ENCODE measurements at regions of chr19 and their contacts with region 1.

Region 1: DNA sequence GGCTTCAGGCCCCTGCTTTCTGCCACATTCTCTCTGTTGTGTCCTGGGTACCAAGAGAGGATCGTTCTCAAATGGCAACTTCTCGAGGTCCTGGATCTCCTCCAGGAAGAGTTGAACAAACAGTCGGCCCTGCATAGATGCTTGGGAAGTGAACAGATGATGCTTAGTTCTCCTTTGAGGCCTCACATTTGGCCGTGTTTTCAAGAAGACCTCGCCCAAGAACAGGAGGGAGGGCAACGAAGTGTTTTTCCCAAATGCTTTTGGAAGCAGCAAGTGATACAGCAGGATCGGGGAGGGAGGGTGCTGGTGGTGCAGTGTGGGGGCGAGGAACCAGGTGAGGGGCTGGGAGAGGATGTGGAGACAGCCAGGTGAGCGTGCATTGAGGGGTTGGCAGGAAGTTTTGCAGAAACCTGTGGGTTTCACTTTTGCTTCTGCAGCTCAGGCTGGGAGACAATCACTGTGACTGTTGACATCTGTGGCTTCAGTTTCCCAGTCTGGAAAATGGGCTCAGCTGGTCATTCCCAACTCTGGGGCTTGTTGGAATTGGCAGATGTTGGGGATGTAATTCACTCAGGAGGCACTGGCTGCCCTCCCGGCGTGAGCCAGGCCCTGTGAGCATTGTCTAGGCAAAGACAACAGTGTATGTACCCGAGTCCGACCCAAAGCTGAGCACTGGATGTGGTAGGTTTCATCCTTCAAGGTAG is 21.6 kb downstream of the MAST3 start:
- DNase-seq: peak; percentile 89
- H3K4me3 Mint-ChIP-seq: peak overlapping the region; percentile 85
- H3K27ac Mint-ChIP-seq: peak overlapping the region; percentile 97
- H3K4me1 Mint-ChIP-seq: peaks cover 30% of the 10 kb centered on the region
- H3K27me3 Mint-ChIP-seq: no peaks in the 10 kb centered on the region

Region 2: GRCh38 chr19:17156927-17157302 is 962.2 kb before region 1 on chr19:
- intact Hi-C with region 1: no loop called
- DNase-seq: no peak
- H3K4me3 Mint-ChIP-seq: no peak overlapping the region
- H3K27ac Mint-ChIP-seq: peak overlapping the region; percentile 1
- H3K4me1 Mint-ChIP-seq: no peaks in the 10 kb centered on the region
- H3K27me3 Mint-ChIP-seq: no peaks in the 10 kb centered on the region

Region 3: GRCh38 chr19:17902701-17903100 is 216.5 kb before region 1 on chr19:
- intact Hi-C with region 1: no loop called
- DNase-seq: no peak
- H3K4me3 Mint-ChIP-seq: no peak overlapping the region
- H3K27ac Mint-ChIP-seq: no peak overlapping the region
- H3K4me1 Mint-ChIP-seq: no peaks in the 10 kb centered on the region
- H3K27me3 Mint-ChIP-seq: peaks cover 13% of the 10 kb centered on the region

Region 4: GRCh38 chr19:18152444-18152816 is 33.3 kb after region 1 on chr19:
- intact Hi-C with region 1: loop called (anchors 1 kb)
- DNase-seq: peak; percentile 99
- H3K4me3 Mint-ChIP-seq: peak overlapping the region; percentile 86
- H3K27ac Mint-ChIP-seq: peak overlapping the region; percentile 96
- H3K4me1 Mint-ChIP-seq: peaks cover 24% of the 10 kb centered on the region
- H3K27me3 Mint-ChIP-seq: no peaks in the 10 kb centered on the region